Activated CD4-positive, alpha-beta T cell treated with anti-CD3 and anti-CD28 coated beads for 36 hours (primary cell): ENCODE measurements at regions of chr2 and their contacts with region 1.

Region 1: GRCh38 chr2:207625018-207625907 is at the start of gene METTL21A:
- DNase-seq: peak; percentile 97
- ATAC-seq: peak; percentile 78
- H3K4me3 Mint-ChIP-seq: peak within 1 kb of the TSS; percentile 90
- H3K27ac Mint-ChIP-seq: peak within 1 kb of the TSS; percentile 98
- H3K4me1 Mint-ChIP-seq: peaks cover 44% of the 10 kb centered on the region
- H3K27me3 Mint-ChIP-seq: no peaks in the 10 kb centered on the region
- total RNA-seq, gene METTL21A: 25.6 to 29.5 TPM

Region 2: DNA sequence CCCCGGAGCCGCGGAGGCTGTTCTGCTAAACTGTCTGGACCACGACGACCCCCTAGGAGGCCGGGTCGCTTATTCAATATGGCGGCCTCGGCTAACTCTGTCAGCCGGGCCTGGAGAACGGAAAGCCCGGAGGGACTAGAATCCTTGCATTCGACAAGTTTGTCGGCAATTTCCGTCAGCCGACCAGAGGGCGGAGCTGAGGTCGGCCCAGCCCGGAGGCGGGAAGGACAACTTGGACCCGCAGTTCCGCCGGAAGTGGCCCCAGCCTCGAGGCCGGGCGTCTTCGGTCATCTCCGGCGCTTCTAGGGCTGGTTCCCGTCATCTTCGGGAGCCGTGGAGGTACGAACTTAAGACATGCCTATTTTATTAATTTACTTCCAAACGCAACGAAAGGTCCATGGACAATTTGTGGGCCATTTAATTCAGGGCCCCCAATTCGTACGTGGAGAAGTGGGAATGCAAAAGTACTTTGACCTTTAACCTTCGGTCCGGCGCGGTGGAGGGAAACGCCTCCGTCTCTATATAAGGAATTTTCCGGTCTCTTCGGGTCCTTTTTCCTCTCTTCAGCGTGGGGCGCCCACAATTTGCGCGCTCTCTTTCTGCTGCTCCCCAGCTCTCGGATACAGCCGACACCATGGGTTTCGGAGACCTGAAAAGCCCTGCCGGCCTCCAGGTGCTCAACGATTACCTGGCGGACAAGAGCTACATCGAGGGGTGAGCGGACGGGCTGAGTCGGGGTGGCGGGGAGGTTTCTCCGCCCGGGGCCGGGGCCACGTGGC is 1465.7 kb before region 1 on chr2 and contains the starts of genes EEF1B2 and NDUFS1:
- CTCF ChIA-PET with region 1: no interaction called
- POLR2A ChIA-PET with region 1: no interaction called
- intact Hi-C with region 1: loop called (anchors 2 to 5 kb)
- DNase-seq: peak; percentile 99
- ATAC-seq: peak; percentile 95
- H3K4me3 Mint-ChIP-seq: peak within 1 kb of the TSS; percentile 97
- H3K27ac Mint-ChIP-seq: peak within 1 kb of the TSS; percentile 89
- H3K4me1 Mint-ChIP-seq: peaks cover 46% of the 10 kb centered on the region
- H3K27me3 Mint-ChIP-seq: no peaks in the 10 kb centered on the region
- total RNA-seq, gene EEF1B2: 983 to 1,166 TPM
- total RNA-seq, gene NDUFS1: 70.6 to 90.4 TPM

Region 3: DNA sequence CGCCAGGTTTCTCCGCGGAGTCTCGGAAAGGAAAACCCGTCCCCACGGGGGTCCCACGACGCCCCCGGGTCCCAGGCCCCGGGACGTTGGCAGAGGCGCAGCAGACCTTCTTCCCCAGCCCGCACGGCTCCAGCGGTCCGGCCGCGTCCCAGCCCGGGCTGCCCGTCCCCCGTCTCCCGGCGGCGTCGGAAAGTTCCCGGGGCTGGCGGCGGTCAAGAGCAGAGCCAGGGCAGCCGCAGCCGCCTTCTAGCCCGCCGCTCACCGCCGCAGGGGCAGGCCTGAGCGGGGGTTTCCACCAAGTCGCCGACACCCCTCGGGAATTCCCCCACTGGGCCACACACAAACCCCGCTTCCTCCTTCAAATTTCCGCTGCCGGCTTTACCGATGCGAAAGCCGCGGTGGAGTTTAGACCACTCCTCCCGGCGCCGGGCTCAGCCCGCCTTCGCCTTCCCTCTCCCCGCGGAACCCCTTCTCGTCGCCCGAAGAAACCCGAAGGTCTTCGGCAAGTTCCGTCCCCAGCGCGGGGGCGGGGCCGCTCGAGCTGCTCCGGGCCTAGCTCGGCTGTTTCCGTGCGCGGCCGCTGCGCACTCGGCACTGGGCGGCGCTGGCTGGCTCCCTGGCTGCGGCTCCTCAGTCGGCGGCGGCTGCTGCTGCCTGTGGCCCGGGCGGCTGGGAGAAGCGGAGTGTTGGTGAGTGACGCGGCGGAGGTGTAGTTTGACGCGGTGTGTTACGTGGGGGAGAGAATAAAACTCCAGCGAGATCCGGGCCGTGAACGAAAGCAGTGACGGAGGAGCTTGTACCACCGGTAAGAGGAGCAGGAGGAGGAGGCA is 95.7 kb before region 1 on chr2 and contains the start of gene CREB1:
- CTCF ChIA-PET with region 1: interaction called, 6 read pairs
- POLR2A ChIA-PET with region 1: interaction called, 6 read pairs
- intact Hi-C with region 1: loop called (anchors 1 kb)
- DNase-seq: peak; percentile 100
- ATAC-seq: peak; percentile 89
- H3K4me3 Mint-ChIP-seq: peak within 1 kb of the TSS; percentile 98
- H3K27ac Mint-ChIP-seq: peak within 1 kb of the TSS; percentile 100
- H3K4me1 Mint-ChIP-seq: peaks cover 57% of the 10 kb centered on the region
- H3K27me3 Mint-ChIP-seq: no peaks in the 10 kb centered on the region
- total RNA-seq, gene CREB1: 85.4 to 136 TPM

Region 4: DNA sequence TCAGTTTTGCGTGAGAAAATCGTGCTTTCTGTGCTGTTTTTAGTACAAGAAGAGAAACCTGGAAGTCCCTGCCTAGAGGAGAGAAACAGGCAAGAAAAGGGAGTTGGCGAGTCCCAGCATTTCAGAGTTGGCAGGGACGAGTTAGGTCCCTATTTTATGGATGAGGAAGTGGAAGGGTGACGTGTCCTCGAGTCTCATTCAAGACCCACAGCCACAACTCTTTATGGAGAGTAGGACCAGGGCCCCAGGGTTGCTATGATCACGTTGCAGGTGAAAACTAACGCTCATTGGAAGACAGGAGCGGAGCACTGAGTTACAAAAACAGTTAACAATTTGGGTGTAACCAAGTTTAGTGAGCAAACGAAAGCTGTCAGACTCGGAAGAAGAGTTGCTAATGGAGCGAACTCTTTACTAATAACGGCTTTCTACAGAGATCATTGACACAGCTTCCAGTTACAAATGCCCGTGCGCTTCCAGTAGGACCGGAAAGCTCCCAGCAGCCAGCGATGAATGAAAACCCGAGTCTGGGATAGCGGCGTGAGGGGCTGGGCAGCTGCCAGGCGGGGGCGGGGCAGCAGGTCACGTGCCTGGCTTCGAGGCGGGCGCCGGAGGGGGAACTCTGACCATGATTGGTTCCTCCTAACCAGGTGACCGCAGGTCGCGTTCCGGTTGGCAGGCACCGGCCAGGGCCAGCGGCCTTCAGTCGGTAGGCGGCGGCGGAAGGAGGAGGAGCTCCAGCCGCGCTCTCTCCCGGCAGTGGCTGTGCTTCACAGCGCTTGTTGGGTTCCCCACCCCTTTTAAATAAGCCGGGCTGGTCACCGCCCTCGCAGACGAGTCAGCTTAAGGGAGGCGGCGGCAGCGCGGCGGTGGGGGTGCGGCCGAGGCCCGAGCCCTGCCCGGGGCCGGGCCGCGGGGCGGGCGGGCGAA is 85.8 kb after region 1 on chr2 and contains the start of gene CCNYL1:
- CTCF ChIA-PET with region 1: interaction called, 8 read pairs
- POLR2A ChIA-PET with region 1: interaction called, 10 read pairs
- intact Hi-C with region 1: loop called (anchors 1 kb)
- DNase-seq: peak; percentile 99
- ATAC-seq: peak; percentile 99
- H3K4me3 Mint-ChIP-seq: peak within 1 kb of the TSS; percentile 83
- H3K27ac Mint-ChIP-seq: peak within 1 kb of the TSS; percentile 88
- H3K4me1 Mint-ChIP-seq: peaks cover 25% of the 10 kb centered on the region
- H3K27me3 Mint-ChIP-seq: no peaks in the 10 kb centered on the region
- total RNA-seq, gene CCNYL1: 4.0 to 5.5 TPM

Region 5: DNA sequence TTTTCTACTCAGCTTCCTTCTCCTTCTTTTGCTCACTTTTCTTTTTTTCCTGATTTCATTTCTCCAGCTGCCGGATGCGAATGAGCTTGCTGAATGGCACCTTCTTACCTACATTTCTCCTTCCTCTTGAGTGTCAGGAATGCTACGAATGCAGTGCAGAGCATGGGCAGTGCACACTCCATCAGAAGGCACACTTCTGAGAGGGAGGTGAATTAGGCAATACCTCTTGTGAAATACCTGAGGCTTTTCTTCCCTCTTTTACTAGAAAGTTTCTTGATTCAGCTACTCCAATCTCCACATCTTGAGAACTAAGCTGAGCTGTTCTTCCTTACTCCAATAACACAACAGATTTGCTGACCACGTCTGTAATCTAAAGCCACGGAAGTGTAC is 348.9 kb after region 1 on chr2:
- CTCF ChIA-PET with region 1: no interaction called
- POLR2A ChIA-PET with region 1: no interaction called
- intact Hi-C with region 1: loop called in 1 of 2 experiments (anchors 2 kb)
- DNase-seq: no peak
- ATAC-seq: no peak
- H3K4me3 Mint-ChIP-seq: no peak overlapping the region
- H3K27ac Mint-ChIP-seq: no peak overlapping the region
- H3K4me1 Mint-ChIP-seq: peaks cover 22% of the 10 kb centered on the region
- H3K27me3 Mint-ChIP-seq: no peaks in the 10 kb centered on the region

Region 6: GRCh38 chr2:208040199-208041171 is 415.2 kb after region 1 on chr2:
- CTCF ChIA-PET with region 1: interaction called, 13 read pairs
- POLR2A ChIA-PET with region 1: no interaction called
- intact Hi-C with region 1: loop called in 1 of 2 experiments (anchors 2 kb)
- DNase-seq: peak; percentile 90
- ATAC-seq: peak; percentile 95
- H3K4me3 Mint-ChIP-seq: no peak overlapping the region
- H3K27ac Mint-ChIP-seq: no peak overlapping the region
- H3K4me1 Mint-ChIP-seq: peaks cover 5% of the 10 kb centered on the region
- H3K27me3 Mint-ChIP-seq: peaks cover 2% of the 10 kb centered on the region

Region 7: DNA sequence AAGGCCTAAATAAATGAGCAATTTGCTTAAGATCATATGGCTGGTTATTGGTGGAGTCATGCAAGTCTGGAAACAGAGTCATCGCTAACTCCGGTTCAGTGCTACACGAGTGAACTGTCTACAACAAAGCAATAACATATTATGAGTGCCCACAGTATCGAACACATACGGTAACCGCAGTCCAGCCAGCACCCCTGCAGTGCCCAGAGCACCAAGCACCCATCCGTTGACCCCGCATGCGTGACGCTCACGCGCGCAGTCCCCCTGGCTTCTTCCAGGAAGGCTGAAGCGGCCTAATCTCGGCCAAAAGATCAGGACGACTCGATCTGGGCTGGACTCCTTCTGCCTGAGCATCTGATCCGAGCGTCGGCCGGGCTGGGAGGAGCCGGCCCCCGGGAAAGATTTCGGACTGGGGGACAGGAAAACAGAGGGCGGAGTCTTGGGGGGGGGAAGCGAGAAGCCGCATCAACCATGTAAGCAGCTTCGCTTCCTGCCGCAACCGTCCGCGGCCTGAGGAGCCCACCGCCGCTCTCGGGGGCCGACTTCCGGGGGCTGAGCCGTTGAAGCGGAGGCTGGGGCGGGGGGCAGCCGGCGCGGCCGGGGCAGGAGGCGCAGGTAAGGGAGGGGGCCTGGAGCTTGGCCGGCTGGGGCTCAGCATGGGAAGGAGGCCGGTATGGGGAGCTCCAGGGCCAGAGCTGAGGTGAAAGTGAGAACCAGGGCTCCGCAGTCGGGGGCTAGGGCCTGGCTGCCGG is 640.7 kb after region 1 on chr2 and contains the start of gene PIKFYVE:
- CTCF ChIA-PET with region 1: no interaction called
- POLR2A ChIA-PET with region 1: no interaction called
- intact Hi-C with region 1: loop called in 1 of 2 experiments (anchors 1 kb)
- DNase-seq: peak; percentile 94
- ATAC-seq: peak; percentile 84
- H3K4me3 Mint-ChIP-seq: peak within 1 kb of the TSS; percentile 84
- H3K27ac Mint-ChIP-seq: peak within 1 kb of the TSS; percentile 94
- H3K4me1 Mint-ChIP-seq: peaks cover 33% of the 10 kb centered on the region
- H3K27me3 Mint-ChIP-seq: no peaks in the 10 kb centered on the region
- total RNA-seq, gene PIKFYVE: 19.3 to 21.5 TPM